ENCODE measurements at regions of chr7 and their contacts with region 1.

Region 1: DNA sequence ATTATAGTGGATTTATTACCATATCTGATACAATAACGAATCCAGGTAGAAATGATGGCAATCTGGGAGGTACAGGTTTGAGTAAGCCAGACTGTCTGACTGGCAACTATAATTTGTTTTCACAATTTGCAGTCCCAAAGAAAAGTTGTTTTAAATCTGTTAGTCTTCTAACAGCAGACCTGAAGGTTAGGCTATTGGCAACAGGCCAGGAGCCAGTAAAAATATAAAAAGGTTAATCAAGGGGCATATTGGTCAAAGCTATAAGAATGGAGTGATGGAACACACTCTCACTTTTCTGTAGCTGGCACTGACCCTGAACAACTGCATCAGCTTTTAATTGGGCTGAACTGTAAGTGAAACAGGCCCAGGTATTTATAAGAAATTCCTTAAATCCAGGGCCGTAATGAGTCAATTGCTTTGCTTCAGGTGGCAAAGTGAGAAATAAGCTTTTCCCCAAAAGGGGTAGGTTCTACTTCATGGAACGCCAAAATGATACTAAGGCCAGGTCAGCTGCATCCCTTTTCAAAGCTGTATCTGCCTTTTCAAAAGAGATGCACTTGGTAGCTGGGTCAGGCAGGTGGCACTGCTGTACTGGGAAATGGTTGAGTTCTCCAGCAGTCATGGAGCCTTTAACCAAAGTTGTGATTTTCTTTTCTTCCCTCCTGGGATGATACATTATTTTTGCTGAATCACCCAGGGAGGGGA is 7.0 kb upstream of the GPR22 start:
- DNase-seq: peak; percentile 19
- ATAC-seq: peak; percentile 90
- H3K4me3 ChIP-seq: no peak overlapping the region
- H3K27ac ChIP-seq: no peak overlapping the region
- H3K4me1 ChIP-seq: no peaks in the 10 kb centered on the region
- H3K27me3 ChIP-seq: no peaks in the 10 kb centered on the region
- CTCF ChIP-seq: peak; percentile 68 to 92 (median 76)
- EP300 ChIP-seq: no peak
- POLR2A ChIP-seq: no peak
- RAD21 ChIP-seq: peak; percentile 88

Region 2: GRCh38 chr7:106347229-106347833 is 1115.6 kb before region 1 on chr7:
- CTCF ChIA-PET with region 1: no interaction called
- POLR2A ChIA-PET with region 1: no interaction called
- RAD21 ChIA-PET with region 1: no interaction called
- SMC1A ChIA-PET with region 1: no interaction called
- in situ Hi-C with region 1: no loop called
- intact Hi-C with region 1: no loop called
- DNase-seq: no peak
- ATAC-seq: peak; percentile 54
- H3K4me3 ChIP-seq: no peak overlapping the region
- H3K27ac ChIP-seq: peak overlapping the region; percentile 43
- H3K4me1 ChIP-seq: peaks cover 20% of the 10 kb centered on the region
- H3K27me3 ChIP-seq: no peaks in the 10 kb centered on the region
- CTCF ChIP-seq: no peak
- EP300 ChIP-seq: no peak
- POLR2A ChIP-seq: no peak
- RAD21 ChIP-seq: no peak

Region 3: GRCh38 chr7:107501593-107501992 is 38.7 kb after region 1 on chr7:
- CTCF ChIA-PET with region 1: interaction called, 30 read pairs
- POLR2A ChIA-PET with region 1: no interaction called
- RAD21 ChIA-PET with region 1: interaction called, 8 read pairs
- SMC1A ChIA-PET with region 1: interaction called, 21 read pairs
- in situ Hi-C with region 1: no loop called
- intact Hi-C with region 1: no loop called
- DNase-seq: no peak
- ATAC-seq: peak; percentile 76
- H3K4me3 ChIP-seq: no peak overlapping the region
- H3K27ac ChIP-seq: no peak overlapping the region
- H3K4me1 ChIP-seq: no peaks in the 10 kb centered on the region
- H3K27me3 ChIP-seq: no peaks in the 10 kb centered on the region
- CTCF ChIP-seq: peak; percentile 36 to 62 (median 49); a peak in 4 of 6 replicates
- EP300 ChIP-seq: no peak
- POLR2A ChIP-seq: no peak
- RAD21 ChIP-seq: peak; percentile 71

Region 4: GRCh38 chr7:107874111-107874510 is 411.2 kb after region 1 on chr7:
- CTCF ChIA-PET with region 1: interaction called, 17 read pairs
- POLR2A ChIA-PET with region 1: no interaction called
- RAD21 ChIA-PET with region 1: interaction called, 11 read pairs
- SMC1A ChIA-PET with region 1: interaction called, 7 read pairs
- in situ Hi-C with region 1: no loop called
- intact Hi-C with region 1: loop called (anchors 1 kb)
- DNase-seq: no peak
- ATAC-seq: no peak
- H3K4me3 ChIP-seq: no peak overlapping the region
- H3K27ac ChIP-seq: no peak overlapping the region
- H3K4me1 ChIP-seq: no peaks in the 10 kb centered on the region
- H3K27me3 ChIP-seq: no peaks in the 10 kb centered on the region; a peak in 2 of 4 replicates
- CTCF ChIP-seq: no peak
- EP300 ChIP-seq: no peak
- POLR2A ChIP-seq: no peak
- RAD21 ChIP-seq: no peak